ENCODE measurements at regions of chr7 and their contacts with region 1.

Region 1: GRCh38 chr7:82044497-82045080 is 274.7 kb upstream of the HGF start:
- DNase-seq: no peak
- H3K4me3 Mint-ChIP-seq: no peak overlapping the region
- H3K27ac Mint-ChIP-seq: no peak overlapping the region
- H3K4me1 Mint-ChIP-seq: no peaks in the 10 kb centered on the region
- H3K27me3 Mint-ChIP-seq: no peaks in the 10 kb centered on the region

Region 2: GRCh38 chr7:80218723-80219122 is 1825.9 kb before region 1 on chr7:
- intact Hi-C with region 1: no loop called
- DNase-seq: no peak
- H3K4me3 Mint-ChIP-seq: no peak overlapping the region
- H3K27ac Mint-ChIP-seq: no peak overlapping the region
- H3K4me1 Mint-ChIP-seq: no peaks in the 10 kb centered on the region
- H3K27me3 Mint-ChIP-seq: no peaks in the 10 kb centered on the region

Region 3: GRCh38 chr7:82481499-82482097 is 437.0 kb after region 1 on chr7:
- intact Hi-C with region 1: loop called (anchors 10 kb)
- DNase-seq: no peak
- H3K4me3 Mint-ChIP-seq: no peak overlapping the region
- H3K27ac Mint-ChIP-seq: no peak overlapping the region
- H3K4me1 Mint-ChIP-seq: no peaks in the 10 kb centered on the region
- H3K27me3 Mint-ChIP-seq: no peaks in the 10 kb centered on the region

Region 4: GRCh38 chr7:83248000-83248399 is 1203.4 kb after region 1 on chr7:
- intact Hi-C with region 1: no loop called
- DNase-seq: no peak
- H3K4me3 Mint-ChIP-seq: no peak overlapping the region
- H3K27ac Mint-ChIP-seq: no peak overlapping the region
- H3K4me1 Mint-ChIP-seq: no peaks in the 10 kb centered on the region
- H3K27me3 Mint-ChIP-seq: no peaks in the 10 kb centered on the region

Measured in activated T-helper 1 cell treated with anti-CD3 and anti-CD28 coated beads, Interleukin-12 subunit alpha, Interleukin-12 subunit beta, Interleukin-2, Interleukin-4 antibody, amounts not matched to agents 30 ng/mL and 10 ng/mL and 1 ng/mL, durations not matched to agents 14 hours and 24 hours and 36 hours (primary cell).